ENCODE measurements at regions of chr10 and their contacts with region 1.

Region 1: GRCh38 chr10:45672181-45673073 is at the start of gene ZFAND4:
- DNase-seq: peak; percentile 99
- CTCF ChIP-seq: peak; percentile 83

Region 2: DNA sequence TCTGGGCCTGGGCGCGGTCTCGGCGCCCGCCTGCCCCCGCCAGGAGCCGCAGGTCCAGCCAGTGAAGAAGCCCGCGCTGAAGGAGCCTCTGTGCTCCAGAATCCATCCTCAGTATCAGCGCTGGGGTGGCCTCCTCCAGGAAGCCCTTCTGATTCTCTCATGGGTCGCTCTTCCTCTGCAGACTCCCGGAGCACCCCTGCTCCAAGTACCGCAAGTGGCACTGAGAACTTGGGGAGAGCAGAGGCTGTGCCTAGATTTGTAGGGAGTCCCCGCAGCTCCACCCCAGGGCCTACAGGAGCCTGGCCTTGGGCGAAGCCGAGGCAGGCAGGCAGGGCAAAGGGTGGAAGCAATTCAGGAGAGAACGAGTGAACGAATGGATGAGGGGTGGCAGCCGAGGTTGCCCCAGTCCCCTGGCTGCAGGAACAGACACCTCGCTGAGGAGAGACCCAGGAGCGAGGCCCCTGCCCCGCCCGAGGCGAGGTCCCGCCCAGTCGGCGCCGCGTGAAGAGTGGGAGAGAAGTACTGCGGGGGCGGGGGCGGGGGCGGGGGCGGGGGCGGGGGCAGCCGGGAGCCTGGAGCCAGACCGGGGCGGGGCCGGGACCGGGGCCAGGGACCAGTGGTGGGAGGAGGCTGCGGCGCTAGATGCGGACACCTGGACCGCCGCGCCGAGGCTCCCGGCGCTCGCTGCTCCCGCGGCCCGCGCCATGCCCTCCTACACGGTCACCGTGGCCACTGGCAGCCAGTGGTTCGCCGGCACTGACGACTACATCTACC is 298.7 kb before region 1 on chr10 and contains the start of gene ALOX5:
- CTCF ChIA-PET with region 1: no interaction called
- POLR2A ChIA-PET with region 1: no interaction called
- DNase-seq: peak; percentile 71
- CTCF ChIP-seq: no peak

Region 3: GRCh38 chr10:45602082-45602730 is 70.2 kb before region 1 on chr10:
- CTCF ChIA-PET with region 1: no interaction called
- POLR2A ChIA-PET with region 1: no interaction called
- DNase-seq: no peak
- CTCF ChIP-seq: no peak

Region 4: DNA sequence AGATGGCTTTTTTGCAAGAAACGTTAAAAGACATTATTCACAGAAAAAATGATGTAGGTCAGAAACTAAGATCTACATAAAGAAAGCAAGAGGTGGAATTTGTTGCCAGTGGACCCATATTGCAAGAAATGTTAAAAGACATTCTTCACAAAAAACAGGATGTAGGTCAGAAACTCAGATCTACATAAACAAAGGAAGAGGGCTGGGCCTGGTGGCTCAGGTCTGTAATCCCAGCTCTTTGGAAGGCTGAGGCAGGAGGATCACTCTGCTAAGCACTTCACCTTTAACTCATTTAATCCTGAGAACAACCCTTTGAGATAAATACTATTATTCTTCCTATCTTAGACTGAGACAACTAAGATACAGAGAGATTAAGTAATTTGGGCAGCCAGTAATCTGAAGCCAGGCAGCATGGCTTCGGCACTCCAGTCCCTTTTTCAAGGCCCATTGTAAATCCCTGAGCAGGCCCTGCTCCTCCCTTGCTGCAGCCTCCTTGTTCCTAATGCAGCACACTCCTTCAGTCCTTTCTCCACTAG is 11.5 kb before region 1 on chr10:
- CTCF ChIA-PET with region 1: interaction called, 19 read pairs
- POLR2A ChIA-PET with region 1: interaction called, 4 read pairs
- DNase-seq: no peak
- CTCF ChIP-seq: no peak

Measured in GM10248 (cell line).